GM10248 (cell line): ENCODE measurements at regions of chr10 and their contacts with region 1.

Region 1: DNA sequence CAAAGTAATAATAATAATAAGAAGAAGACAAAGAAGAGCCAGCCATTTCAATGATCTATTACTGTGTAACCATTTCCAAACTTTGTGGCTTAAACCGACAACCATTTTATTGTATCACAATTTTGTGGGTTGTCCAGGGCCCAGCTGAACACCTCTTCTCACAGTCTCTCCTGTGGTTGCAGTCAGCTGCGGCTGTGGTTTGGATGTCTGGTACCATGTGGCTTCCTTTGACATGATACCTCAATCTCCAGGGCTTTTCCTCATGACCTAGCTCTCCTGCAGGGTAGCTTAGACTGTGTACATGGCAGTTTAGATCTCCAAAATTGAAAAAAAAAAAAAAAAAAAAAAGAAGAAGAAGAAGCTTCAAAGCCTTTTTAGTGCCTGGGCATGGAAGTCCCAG is 72.6 kb upstream of the NFKB2 start:
- DNase-seq: no peak
- CTCF ChIP-seq: no peak

Region 2: DNA sequence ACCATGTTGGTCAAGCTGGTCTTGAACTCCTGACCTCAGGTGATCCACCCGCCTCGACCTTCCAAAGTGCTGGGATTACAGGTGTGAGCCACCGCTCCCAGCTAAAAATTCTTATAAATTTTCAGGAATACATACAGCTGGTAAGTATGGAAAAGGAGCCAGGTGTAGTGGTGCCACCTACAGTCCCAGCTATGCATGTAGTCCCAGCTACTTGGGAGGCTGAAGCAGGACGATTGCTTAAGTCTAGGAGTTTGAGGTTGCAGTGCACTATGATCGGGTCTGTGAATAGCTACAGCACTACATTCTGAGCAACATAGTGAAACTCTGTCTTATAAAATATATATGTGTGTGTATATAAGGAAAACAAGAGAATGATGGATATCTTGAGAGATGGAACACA is 221.8 kb before region 1 on chr10:
- CTCF ChIA-PET with region 1: no interaction called
- POLR2A ChIA-PET with region 1: no interaction called
- DNase-seq: no peak
- CTCF ChIP-seq: no peak

Region 3: DNA sequence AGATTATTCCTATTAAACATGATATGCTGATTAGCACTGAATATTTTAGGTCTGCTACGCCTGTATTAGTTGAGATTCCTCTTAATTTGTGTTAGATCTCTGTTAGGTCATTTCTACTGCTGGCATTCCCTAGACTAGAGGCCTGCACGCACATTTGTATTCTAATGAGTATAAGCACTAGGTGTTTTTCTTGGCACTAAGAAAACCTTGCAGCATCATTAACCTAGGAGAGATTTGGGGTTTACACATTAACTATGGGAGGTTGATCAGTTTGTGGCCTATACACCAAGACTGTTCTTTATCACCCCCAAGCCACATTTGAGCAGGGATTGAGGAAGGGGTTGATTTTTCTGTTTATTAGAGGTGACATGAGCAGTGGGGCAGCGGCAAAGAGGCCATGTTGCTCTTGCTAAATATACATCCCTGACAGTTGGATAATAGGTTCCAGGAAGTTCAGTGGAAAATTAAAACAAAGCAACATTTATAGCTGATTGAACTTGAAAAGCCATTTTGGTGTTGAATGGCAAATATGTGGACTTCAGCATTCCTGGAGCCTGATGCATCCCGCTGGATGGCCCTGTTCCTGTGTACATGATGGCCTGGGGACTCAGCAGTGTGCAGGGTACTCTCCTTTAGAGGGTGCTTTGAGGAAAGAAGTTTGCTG is 12.4 kb before region 1 on chr10:
- CTCF ChIA-PET with region 1: interaction called, 10 read pairs
- POLR2A ChIA-PET with region 1: interaction called, 3 read pairs
- DNase-seq: no peak
- CTCF ChIP-seq: no peak